ENCODE measurements at regions of chr1 and their contacts with region 1.

Region 1: DNA sequence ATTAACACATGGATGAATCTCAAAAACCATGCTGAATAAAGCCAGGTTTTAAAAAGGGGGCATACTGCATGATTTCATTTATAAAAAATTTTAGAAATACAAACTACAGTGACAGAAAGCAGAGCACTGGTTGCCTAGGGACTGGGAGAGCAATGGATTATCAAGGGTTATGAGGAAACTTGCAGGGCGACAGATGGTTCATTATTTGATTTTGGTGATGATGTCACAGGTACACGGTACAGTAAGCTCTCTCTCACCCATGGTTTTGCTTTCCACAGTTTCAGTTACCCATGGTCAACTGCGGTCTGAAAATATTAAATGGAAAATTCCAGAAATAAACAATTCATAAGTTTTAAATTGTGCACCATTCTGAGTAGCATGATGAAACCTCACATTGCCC is 14.1 kb downstream of the VAMP4 start:
- DNase-seq: no peak
- H3K4me3 ChIP-seq: no peak overlapping the region
- H3K27ac ChIP-seq: no peak overlapping the region
- H3K4me1 ChIP-seq: no peaks in the 10 kb centered on the region
- H3K27me3 ChIP-seq: no peaks in the 10 kb centered on the region
- CTCF ChIP-seq: no peak
- EP300 ChIP-seq: no peak
- RAD21 ChIP-seq: no peak

Region 2: DNA sequence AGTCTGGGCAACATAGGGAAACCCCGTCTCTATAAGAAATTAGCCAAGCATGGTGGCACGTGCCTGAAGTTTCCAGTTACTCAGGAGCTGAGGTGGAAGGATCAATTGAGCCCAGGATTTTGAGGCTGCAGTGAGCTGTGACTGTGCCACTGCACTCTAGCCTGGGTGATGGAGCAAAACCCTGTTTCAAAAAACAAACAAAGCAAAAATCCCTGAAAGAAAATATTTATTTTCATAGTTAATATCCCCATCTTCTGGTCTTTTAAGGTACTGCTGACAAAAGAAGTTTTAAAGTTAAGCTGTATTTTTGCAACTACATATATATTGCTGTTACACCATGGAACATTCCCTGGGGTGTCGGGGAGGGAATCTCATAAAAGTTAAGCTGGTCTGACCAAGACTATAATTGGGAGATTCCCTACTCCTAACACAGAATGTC is 11.9 kb before region 1 on chr1:
- CTCF ChIA-PET with region 1: interaction called, 10 read pairs
- POLR2A ChIA-PET with region 1: no interaction called
- DNase-seq: no peak
- H3K4me3 ChIP-seq: no peak overlapping the region
- H3K27ac ChIP-seq: no peak overlapping the region
- H3K4me1 ChIP-seq: no peaks in the 10 kb centered on the region
- H3K27me3 ChIP-seq: no peaks in the 10 kb centered on the region
- CTCF ChIP-seq: peak; percentile 70
- EP300 ChIP-seq: no peak
- RAD21 ChIP-seq: peak; percentile 55

Region 3: DNA sequence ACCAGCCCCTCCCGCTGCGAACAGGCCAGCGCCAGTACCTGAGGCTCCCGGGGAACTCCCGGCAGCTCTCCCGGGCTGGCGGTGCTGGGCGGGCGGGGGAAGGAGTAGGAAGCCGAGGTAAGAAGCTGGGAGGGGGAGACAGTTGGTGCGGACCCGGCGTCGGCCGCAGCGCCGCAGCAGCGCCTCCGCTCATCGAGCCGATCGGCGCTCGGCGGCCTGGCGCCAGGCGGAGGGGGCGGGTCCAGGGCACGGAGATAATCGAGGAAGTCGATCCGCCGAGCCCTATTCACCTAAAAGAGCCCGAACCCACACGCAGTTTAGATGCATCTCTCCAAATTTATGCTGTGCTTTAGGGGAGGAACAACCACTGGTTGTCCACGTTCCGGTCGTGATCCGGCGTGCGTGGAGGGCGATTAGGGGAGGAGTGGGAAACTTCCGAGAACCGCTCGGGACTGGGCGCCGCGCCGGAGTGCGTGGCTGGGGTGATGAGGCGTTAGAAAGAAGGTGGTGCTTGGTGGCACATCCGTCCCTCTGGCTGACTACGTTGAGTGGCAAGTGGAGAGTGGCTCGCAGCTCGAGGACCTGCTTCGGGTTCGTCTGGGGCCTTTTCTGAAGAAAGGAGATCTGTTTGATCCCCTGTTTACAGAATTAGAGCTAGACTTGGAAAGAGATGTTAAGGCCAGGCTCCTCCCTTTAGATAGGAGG is 14.2 kb after region 1 on chr1 and contains the start of gene VAMP4:
- CTCF ChIA-PET with region 1: interaction called, 14 read pairs
- POLR2A ChIA-PET with region 1: interaction called, 3 read pairs
- DNase-seq: peak; percentile 92
- H3K4me3 ChIP-seq: peak within 1 kb of the TSS; percentile 59 to 96
- H3K27ac ChIP-seq: peak within 1 kb of the TSS; percentile 95 to 100
- H3K4me1 ChIP-seq: peaks cover 19 to 22% of the 10 kb centered on the region in 2 experiments
- H3K27me3 ChIP-seq: no peaks in the 10 kb centered on the region
- CTCF ChIP-seq: no peak
- EP300 ChIP-seq: no peak; a peak in 1 of 4 replicates
- RAD21 ChIP-seq: no peak
- polyA plus RNA-seq, gene VAMP4: 2.5 and 3.3 TPM in 2 replicates